Left colon (tissue), 2 donors: ENCODE measurements at regions of chr3 and their contacts with region 1.

Region 1: DNA sequence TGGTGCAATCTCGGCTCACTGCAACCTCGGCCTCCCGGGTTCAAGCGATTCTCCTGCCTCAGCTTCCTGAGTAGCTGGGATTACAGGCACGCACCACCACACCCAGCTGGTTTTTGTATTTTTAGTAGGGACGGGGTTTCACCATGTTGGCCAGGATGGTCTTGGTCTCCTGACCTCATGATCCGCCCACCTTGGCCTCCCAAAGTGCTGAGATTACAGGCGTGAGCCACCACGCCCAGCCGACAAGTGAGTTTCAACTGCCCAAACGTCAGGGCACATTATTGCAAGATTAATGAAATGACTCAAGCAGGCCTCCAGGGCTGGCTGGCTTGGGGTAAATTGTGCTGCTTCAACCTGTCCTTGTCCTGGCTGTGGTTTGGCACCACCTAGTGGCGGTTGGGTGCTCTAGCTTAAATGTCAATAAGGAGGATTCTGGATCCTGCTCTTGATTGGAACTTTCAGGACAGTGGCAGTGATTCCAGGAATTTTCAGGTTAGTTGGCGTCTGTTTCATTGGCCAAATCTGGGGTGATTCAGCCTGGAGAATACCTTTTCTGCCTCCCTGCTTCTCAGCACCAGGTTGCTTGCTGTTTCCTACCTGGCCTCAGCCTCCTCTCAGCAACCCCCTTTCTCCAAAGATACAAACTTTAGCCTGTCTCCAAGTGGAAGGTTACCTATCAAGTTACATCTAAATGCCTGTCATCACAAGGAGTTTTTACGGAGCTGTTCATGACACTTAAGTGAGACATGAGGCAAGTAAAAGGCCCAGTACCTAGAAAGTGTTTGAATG is 32.4 kb upstream of the SACM1L start:
- DNase-seq: peak; percentile 89 to 91
- ATAC-seq: peak; percentile 86

Region 2: DNA sequence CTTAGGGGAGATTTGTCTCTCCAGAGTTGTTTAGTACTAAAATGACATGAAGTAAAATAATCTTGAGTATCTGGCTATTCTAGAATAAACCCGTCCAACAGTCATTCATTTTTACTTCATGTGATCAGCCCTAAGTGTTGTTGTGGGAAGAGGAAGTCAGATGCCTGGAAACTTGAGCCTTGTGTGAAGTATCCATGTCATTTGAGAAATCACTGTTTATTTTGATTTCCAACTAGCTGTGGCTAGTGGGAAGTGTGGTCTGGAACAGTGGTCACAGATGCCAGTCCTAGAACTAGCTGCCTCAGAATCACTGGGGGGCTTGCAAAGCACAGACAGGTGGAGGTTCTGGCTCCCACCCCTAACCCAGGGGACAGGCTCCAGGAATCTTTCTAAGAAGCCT is 139.9 kb before region 1 on chr3:
- intact Hi-C with region 1: loop called (anchors 2 to 5 kb)
- DNase-seq: no peak
- ATAC-seq: no peak

Region 3: DNA sequence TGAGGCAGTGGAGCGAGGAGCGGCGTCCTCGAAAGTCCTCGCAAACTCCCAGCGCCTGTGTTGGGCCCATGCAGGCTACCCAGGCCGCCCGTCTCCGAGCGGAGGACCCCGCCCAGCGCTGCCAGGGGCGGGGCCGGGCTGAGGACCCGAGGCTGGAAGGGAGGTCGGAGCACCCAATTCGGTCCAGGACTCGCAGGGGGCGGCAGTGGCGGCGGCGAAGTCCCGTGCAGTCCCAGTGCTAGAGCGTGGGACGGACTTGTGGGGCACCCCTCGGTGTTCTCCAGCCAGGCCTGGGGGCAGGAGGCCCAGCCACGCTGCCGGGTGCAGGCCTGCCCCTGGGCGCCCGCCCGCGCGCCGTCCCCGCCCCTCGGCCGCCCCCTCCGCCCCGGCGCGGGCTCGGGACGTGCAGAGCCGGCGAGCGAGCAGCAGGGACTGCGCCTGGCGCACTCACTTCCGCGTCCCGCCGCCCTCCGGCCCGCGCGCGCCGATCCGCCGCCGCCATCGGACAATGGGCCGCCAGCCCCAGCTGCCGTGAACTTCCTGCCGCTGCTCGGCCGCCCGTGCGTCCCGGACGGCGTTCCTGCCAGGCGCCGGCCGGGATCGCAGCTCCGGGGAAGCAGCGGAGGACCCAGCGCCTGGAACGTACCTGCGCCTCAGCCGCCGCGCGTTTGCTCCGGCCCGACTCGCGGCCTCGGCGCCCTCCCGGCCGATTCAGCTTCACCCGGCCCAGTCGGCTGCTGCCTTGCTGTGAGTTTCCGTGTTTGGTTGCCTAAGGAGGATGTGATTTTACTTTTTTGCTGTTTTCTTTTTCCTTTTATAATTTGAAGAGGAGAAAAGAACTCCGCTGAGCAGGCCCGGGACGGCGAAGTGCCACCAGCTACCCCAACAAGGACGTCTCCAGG is 62.8 kb before region 1 on chr3:
- intact Hi-C with region 1: loop called in 1 of 2 experiments (anchors 5 kb)
- DNase-seq: peak; percentile 71 to 81
- ATAC-seq: peak; percentile 81